Naive thymus-derived CD8-positive, alpha-beta T cell (primary cell): ENCODE measurements at regions of chr19 and their contacts with region 1.

Region 1: DNA sequence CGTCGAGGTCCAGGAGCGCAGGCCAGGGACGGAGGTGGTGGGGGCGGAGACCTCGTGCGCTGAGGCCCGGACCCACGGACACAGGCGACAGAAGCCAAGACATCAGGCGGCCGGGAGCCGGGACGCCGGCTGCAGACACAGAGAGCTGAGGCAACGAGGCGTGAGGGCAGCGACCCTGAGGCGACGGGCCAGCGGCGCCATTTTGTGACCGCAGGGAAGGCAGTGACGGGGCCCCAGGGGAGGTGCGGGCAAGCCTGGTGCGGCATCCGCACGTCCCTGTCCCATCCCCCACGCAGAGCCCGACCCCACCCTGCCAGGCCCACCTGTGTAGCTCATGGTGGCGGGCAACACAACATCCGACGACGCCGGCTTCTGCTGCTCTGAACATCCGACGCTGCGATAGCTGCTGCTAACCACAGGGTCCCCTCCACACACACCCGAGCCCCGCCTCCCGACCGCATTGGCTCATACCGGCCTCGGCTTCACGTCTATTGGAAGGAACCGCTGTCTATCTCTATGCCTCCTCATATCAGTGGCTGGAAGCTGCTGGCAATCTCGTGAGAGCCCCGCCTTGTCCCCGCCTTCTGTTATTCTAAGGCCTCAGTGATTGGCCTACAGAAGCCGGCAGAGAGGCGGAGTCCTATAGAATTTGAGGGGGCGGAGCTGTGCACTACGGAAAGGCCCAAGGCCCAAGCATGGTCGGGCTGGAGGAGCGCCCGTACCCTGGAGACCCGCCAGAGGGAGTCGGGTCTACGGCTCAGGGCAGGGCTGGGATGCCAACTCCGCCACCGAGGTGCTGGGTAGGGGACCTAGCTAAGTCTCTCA is at the start of gene AKAP8L:
- DNase-seq: peak; percentile 93 to 100 (median 99)
- ATAC-seq: peak; percentile 90 to 92
- H3K4me3 Mint-ChIP-seq: peak within 1 kb of the TSS; percentile 90 to 100 (median 98)
- H3K27ac Mint-ChIP-seq: peak within 1 kb of the TSS; percentile 96 to 100 (median 98)
- H3K4me1 Mint-ChIP-seq: peaks cover 27 to 54% (median 48%) of the 10 kb centered on the region in 4 donors
- H3K27me3 Mint-ChIP-seq: no peaks in the 10 kb centered on the region
- polyA plus RNA-seq, gene AKAP8L: 38.7 to 80.7 (median 40.6) TPM

Region 2: DNA sequence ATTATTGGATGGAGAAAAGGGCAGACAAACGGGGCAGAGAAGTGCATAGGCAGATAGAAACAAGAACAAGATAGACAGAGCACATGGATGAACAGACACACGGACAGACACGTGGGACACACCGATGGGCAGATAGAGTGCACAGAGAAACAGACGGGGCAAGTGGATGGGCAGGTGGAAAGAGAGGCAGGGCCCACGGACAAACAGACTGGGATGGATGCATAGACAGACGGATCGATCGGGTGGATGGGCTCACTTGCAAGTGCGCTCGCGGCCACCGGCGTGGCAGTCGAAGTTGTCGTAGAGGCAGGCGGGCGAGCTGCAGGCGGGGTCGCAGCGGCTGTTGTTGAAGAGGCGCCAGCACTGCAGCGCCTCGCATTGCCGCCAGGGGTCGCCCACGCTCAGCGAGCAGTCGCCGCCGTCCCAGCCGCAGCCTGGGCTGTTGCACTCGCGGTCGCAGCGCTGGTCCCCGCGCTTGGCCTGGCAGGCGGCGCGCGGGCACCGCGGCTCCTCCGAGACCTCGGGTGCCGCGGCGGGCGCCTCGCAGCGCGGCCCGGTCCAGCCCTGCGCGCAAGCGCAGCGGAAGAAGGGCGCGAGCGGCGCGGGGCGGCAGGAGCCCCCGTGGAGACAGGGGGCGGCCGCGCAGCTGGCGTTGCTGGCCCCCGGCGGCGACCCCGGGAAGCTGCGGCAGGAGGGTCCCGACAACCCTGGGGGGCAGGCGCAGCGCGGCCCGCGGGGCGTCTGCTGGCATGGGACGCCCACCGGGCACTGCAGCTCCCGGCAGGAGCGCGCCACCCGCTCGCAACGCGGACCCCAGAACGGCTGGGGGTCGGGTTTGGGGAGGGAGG is 241.3 kb before region 1 on chr19:
- POLR2A ChIA-PET with region 1: interaction called, 10 read pairs
- DNase-seq: peak; percentile 72 to 89 (median 83)
- ATAC-seq: peak; percentile 96 to 99
- H3K4me3 Mint-ChIP-seq: peak overlapping the region; percentile 7 to 72 (median 64)
- H3K27ac Mint-ChIP-seq: peak overlapping the region in 3 of 10 donors; percentile 68 to 85 (median 81)
- H3K4me1 Mint-ChIP-seq: peaks cover 4 to 7% (median 5%) of the 10 kb centered on the region in 4 donors
- H3K27me3 Mint-ChIP-seq: peaks cover 0 to 15% (median 9%) of the 10 kb centered on the region in 5 donors

Region 3: GRCh38 chr19:15259907-15260306 is 158.9 kb before region 1 on chr19:
- POLR2A ChIA-PET with region 1: no interaction called
- DNase-seq: no peak
- ATAC-seq: no peak
- H3K4me3 Mint-ChIP-seq: no peak overlapping the region
- H3K27ac Mint-ChIP-seq: peak overlapping the region in 1 of 10 donors; percentile 37
- H3K4me1 Mint-ChIP-seq: peaks cover 1 to 7% (median 3%) of the 10 kb centered on the region in 4 donors
- H3K27me3 Mint-ChIP-seq: no peaks in the 10 kb centered on the region

Region 4: GRCh38 chr19:15354566-15355296 is 64.1 kb before region 1 on chr19:
- POLR2A ChIA-PET with region 1: no interaction called
- DNase-seq: no peak
- ATAC-seq: no peak
- H3K4me3 Mint-ChIP-seq: no peak overlapping the region
- H3K27ac Mint-ChIP-seq: peak overlapping the region in 1 of 10 donors; percentile 47
- H3K4me1 Mint-ChIP-seq: no peaks in the 10 kb centered on the region
- H3K27me3 Mint-ChIP-seq: no peaks in the 10 kb centered on the region

Region 5: GRCh38 chr19:15371786-15372380 is 46.9 kb before region 1 on chr19:
- POLR2A ChIA-PET with region 1: interaction called, 110 read pairs
- DNase-seq: no peak
- ATAC-seq: no peak
- H3K4me3 Mint-ChIP-seq: no peak overlapping the region
- H3K27ac Mint-ChIP-seq: no peak overlapping the region
- H3K4me1 Mint-ChIP-seq: peaks cover 3 to 22% (median 15%) of the 10 kb centered on the region in 4 donors
- H3K27me3 Mint-ChIP-seq: no peaks in the 10 kb centered on the region

Region 6: GRCh38 chr19:15432629-15433518 is 14.1 kb after region 1 on chr19:
- POLR2A ChIA-PET with region 1: interaction called, 87 read pairs
- DNase-seq: peak; percentile 83 to 94 (median 90)
- ATAC-seq: peak; percentile 89 to 94
- H3K4me3 Mint-ChIP-seq: peak overlapping the region; percentile 88 to 99 (median 94)
- H3K27ac Mint-ChIP-seq: peak overlapping the region; percentile 84 to 99 (median 95)
- H3K4me1 Mint-ChIP-seq: peaks cover 19 to 34% (median 29%) of the 10 kb centered on the region in 4 donors
- H3K27me3 Mint-ChIP-seq: no peaks in the 10 kb centered on the region

Region 7: DNA sequence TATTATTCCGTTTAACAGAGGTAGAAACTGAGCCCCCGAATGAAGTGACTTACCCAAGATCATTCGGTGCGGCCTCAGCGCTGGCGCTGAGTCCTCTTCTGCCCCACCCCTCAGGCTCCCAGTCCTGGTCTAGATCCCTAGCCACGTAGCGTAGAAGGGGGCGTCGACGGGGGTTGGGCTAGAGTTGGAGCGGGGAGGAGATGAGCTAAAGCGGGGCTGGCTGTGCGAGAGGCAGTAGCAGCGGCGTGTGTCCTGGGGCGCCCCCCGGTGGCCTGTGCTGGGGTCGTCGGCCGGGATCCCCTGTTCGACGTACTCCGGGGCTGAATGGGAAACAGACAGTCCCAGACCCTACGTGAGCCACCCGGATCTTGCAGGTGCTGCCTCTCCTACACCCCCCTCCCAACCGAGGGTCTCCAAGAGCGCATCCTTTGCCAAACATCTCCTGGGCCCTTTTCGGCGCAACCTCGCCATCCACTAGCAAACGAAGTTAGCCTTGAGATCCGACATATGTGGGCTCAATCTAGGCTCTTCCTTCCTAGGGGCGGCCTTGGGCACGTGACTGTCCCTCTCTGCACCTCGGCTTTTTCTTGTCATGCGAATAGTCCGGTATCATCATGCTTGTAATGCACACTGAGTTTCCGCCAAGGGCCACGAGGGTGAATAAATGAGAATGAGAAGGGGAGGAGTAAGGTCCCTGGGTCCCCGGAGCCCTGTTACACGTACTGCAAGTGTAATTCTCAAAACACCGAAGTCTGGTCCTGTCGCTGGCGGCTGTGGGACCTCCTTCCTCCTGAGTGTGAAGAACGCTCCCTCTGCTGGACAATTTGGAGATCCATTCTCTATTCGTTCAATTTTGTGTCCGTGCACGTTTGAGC is 137.2 kb after region 1 on chr19:
- POLR2A ChIA-PET with region 1: interaction called, 124 read pairs
- DNase-seq: peak; percentile 92 to 98 (median 96)
- ATAC-seq: peak; percentile 86
- H3K4me3 Mint-ChIP-seq: peak overlapping the region; percentile 77 to 92 (median 86)
- H3K27ac Mint-ChIP-seq: peak overlapping the region; percentile 80 to 98 (median 91)
- H3K4me1 Mint-ChIP-seq: peaks cover 13 to 29% (median 17%) of the 10 kb centered on the region in 4 donors
- H3K27me3 Mint-ChIP-seq: peaks cover 0 to 2% (median 0%) of the 10 kb centered on the region in 5 donors